T-cell (primary cell): ENCODE measurements at regions of chr22 and their contacts with region 1.

Region 1: GRCh38 chr22:40076702-40077645 is 82.2 kb downstream of the FAM83F start:
- DNase-seq: no peak
- ATAC-seq: peak in 2 of 4 experiments; percentile 26 to 60
- H3K4me3 ChIP-seq: no peak overlapping the region
- H3K4me3 Mint-ChIP-seq: peak overlapping the region in 2 of 3 donors; percentile 36 to 66
- H3K27ac ChIP-seq: no peak overlapping the region
- H3K27ac Mint-ChIP-seq: peak overlapping the region; percentile 49 to 69
- H3K4me1 ChIP-seq: peaks cover 16 to 43% of the 10 kb centered on the region in 2 experiments
- H3K4me1 Mint-ChIP-seq: peaks cover 50 to 58% (median 53%) of the 10 kb centered on the region in 3 donors
- H3K27me3 ChIP-seq: no peaks in the 10 kb centered on the region
- H3K27me3 Mint-ChIP-seq: no peaks in the 10 kb centered on the region

Region 2: DNA sequence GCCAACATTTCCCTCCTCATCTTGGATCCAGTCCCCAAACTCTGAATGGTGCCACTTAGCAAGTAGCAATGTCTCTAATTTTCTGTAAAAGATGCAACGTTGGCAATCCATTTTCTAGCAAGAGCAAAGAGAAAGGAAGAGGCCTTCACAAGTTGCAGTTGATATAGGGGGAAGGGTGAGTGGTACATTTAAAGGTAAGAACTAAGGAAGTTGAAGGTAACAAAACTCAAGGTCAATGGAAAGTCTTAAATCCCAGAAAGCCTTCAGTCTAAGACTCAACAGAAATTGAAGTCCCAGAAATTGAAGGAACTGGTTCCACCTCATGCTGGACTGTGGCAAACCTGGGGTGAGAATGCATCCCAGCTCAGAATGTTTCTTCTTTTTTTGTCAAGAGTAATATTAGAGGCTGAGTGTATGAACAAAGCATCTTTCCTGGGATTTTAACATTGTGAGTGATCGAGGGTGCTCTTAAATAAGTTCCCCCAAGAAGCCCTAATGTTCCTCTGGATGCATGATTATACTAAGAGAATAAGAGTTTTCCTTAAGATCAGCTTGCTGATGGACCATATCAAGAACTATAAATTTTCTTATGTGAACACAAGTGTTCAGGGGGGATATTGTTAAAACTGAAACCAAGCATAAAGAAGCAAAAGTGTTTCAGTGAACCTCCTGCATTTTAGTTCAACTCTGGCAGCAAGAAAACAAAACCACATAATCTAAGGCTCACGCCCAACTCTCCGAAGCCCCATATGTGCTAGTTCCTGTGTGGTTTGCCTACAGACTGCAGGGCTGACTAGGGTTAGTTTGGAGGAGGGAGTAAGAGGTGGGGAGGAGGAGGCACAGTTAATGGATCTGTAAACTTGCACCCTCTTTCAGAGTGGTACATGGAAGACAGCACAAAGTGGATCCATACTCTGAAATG is 176.4 kb before region 1 on chr22 and contains the start of gene GRAP2:
- CTCF ChIA-PET with region 1: interaction called in 1 of 2 experiments, 10 read pairs
- POLR2A ChIA-PET with region 1: no interaction called
- DNase-seq: peak in 34 of 35 experiments; percentile 54 to 88 (median 71)
- ATAC-seq: peak; percentile 93 to 96 (median 94)
- H3K4me3 ChIP-seq: peak within 1 kb of the TSS; percentile 72 to 91
- H3K4me3 Mint-ChIP-seq: peak within 1 kb of the TSS; percentile 84 to 98 (median 97)
- H3K27ac ChIP-seq: peak within 1 kb of the TSS; percentile 87
- H3K27ac Mint-ChIP-seq: peak within 1 kb of the TSS; percentile 99 to 100
- H3K4me1 ChIP-seq: peaks cover 26 to 28% of the 10 kb centered on the region in 2 experiments
- H3K4me1 Mint-ChIP-seq: peaks cover 20 to 33% (median 28%) of the 10 kb centered on the region in 3 donors
- H3K27me3 ChIP-seq: no peaks in the 10 kb centered on the region
- H3K27me3 Mint-ChIP-seq: no peaks in the 10 kb centered on the region
- total RNA-seq, gene GRAP2: 138 to 199 (median 157) TPM